AG04449 (cell line): ENCODE measurements at regions of chr22 and their contacts with region 1.

Region 1: GRCh38 chr22:24423519-24424000 is 3.8 kb upstream of the ADORA2A start:
- DNase-seq: no peak
- H3K4me3 ChIP-seq: peak overlapping the region; percentile 57
- CTCF ChIP-seq: peak; percentile 80

Region 2: DNA sequence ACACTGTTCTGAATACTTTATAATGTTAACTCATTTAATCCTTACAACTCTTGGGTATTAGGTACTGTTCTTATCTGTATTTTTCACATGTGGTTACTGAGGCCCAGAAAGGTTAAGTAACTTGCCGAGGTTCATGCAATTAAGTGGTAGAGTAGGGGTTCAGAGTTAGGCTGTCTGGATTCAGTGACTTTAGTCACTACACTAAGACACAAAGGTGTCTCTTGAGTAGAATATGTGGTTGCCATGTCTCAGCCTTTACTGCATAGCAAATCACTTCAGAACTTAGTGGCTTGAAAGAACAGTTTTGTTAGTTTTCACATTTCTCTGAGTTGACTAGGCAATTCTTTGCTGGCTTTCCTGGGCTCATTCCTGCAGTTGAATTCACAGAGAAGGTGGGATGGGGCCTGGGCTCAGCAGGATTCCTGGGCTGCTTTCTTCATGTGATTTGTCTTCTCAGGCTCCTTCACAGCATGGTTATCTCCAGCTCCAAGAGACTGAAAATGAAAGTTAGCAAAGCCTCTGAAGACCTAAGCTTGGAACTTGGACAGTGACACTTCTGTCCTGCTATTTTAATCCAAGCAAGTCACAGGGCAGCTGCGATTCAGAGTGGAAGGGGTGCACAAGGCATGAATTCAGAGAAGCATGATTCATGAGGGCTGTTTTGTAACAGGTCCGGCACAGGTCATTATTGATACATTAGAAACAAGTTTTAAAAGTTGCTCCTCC is 84.7 kb before region 1 on chr22:
- CTCF ChIA-PET with region 1: no interaction called
- POLR2A ChIA-PET with region 1: no interaction called
- DNase-seq: peak; percentile 26
- H3K4me3 ChIP-seq: no peak overlapping the region
- CTCF ChIP-seq: no peak

Region 3: DNA sequence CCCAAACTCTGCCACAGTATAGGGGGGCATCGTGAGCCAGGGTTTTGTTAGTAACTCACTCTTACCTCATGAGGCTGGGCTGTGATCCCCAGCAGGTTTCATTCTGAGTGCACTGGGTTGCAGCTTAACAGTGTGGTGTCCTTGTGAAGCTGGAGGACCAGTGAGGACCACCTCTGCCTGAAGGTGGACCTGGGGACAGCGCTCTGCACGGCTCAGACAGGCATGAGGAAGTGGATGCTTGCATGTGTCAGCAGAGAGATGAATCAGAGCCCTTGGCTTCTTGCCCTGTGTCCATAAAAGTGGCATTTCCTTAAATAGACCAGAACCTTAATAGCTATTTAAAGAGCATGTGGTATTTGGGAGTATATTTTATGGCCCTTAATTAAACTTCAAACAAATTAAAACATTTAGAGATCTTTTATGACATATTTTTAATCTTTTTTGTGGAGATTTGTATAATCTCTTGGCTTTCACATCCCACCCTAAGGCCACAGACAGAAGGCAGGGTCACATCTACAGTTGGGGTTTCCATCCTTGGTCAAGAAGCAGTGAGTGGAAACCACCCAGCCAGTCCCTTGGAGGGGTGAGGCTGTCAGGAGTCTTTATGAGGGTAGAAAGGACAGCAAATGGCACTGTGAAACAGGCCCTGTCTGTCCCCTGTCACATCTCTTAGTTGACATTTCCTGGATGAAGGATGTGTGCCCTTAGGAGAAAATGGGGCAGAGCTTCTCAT is 20.9 kb before region 1 on chr22:
- CTCF ChIA-PET with region 1: interaction called, 15 read pairs
- POLR2A ChIA-PET with region 1: interaction called, 3 read pairs
- DNase-seq: peak; percentile 86
- H3K4me3 ChIP-seq: no peak overlapping the region
- CTCF ChIP-seq: no peak

Region 4: DNA sequence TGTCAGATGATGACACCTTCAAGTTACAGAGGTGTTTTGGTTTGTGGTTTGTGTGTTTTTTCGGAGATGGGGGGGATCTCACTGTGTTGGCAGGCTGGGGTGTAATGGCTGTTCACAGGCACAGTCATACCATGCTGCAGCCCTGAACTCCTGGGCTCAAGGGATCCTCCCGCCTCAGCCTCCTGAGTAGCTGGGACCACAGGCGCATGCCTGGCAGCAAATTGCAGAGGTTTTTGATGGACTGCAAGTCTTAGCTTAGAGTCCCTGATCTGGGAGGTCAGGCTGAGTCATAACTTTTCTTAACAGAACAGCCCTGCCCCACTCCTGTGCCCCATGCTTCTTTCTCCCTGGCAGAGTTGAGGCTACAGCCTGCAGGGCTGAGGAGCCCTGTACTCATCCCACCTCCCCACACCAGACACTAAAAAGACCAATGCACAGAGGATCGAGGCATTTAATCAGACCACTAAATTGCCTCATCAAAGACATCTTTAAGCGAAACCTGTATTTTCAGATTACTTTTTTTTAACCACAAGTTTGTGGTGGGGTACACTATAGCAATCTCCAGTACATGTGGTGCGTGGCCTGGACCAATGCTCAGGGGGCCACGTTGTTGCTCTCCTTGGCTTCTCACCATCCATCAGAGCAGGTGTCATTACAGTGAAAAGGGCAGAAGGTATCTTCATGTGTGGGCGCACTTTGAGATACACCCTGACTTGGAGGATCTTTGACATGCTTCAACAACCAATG is 13.3 kb before region 1 on chr22:
- CTCF ChIA-PET with region 1: interaction called, 32 read pairs
- POLR2A ChIA-PET with region 1: interaction called, 3 read pairs
- DNase-seq: no peak
- H3K4me3 ChIP-seq: no peak overlapping the region
- CTCF ChIP-seq: no peak

Region 5: GRCh38 chr22:24433813-24434470 is 10.4 kb after region 1 on chr22:
- CTCF ChIA-PET with region 1: interaction called, 63 read pairs
- POLR2A ChIA-PET with region 1: no interaction called
- DNase-seq: no peak
- H3K4me3 ChIP-seq: no peak overlapping the region
- CTCF ChIP-seq: no peak

Region 6: DNA sequence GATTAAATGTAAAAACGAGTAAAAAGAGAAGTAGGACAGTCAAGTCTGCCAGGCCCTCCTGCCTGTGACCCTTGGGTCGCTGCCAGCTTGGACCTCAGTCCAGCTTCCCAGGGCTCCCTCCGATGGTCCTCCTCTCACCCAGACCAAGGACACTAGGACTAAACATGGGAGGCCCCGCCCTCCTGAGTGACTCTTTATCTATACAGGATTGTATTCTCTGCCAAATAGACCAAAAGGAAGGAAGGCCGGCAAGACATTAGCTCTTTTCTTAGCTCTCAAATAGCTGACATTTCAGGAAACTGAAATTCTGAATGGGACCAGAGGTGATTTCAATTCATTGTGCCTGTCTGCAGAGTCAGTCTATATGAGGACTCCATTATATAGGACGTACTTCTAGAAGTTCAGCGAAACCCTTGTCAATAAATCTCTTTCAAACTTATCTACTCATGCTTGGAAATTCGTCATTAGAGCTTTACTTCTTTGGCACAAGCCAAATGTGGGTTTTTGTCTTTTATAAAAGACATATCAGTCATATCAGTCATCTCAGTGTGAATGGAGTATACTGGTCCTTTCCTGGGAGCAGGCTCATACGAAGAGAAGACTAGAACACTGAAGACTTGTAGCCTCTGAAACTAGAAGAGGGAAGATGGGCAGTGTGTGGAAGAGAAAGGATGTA is 32.3 kb after region 1 on chr22:
- CTCF ChIA-PET with region 1: interaction called, 12 read pairs
- POLR2A ChIA-PET with region 1: no interaction called
- DNase-seq: no peak
- H3K4me3 ChIP-seq: no peak overlapping the region
- CTCF ChIP-seq: no peak

Region 7: GRCh38 chr22:24503137-24503842 is 79.7 kb after region 1 on chr22:
- CTCF ChIA-PET with region 1: interaction called, 50 read pairs
- POLR2A ChIA-PET with region 1: no interaction called
- DNase-seq: no peak
- H3K4me3 ChIP-seq: no peak overlapping the region
- CTCF ChIP-seq: peak; percentile 75

Region 8: DNA sequence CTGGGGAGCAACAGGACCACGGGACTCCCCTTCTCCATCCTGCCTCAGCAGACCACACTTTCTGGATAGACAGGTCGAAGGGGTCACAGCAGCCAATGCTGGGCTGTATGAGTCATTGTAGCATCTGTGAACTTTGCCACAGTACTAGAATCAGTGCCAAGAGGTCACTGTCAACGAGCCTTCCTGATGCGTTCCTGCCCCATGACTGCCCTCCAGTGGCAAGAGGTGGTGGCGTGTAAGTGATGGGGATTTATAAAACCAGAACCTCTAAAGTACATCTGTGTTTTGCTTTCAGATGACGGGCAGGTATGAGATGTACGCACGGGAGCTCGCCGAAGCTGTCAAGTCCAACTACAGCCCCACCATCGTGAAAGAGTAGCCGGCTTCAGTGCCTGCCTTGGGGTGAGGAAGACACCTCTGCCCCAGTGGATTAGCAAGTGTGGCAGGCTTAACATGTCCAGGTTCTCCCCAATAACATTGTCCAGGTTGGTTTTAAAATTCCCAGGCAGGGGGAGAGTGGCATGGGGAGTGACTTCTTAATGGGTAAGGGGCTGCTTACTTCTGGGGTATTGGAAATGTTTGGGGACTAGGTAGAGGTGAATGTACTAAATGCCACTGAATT is 102.0 kb after region 1 on chr22:
- CTCF ChIA-PET with region 1: interaction called, 39 read pairs
- POLR2A ChIA-PET with region 1: no interaction called
- DNase-seq: no peak
- H3K4me3 ChIP-seq: no peak overlapping the region
- CTCF ChIP-seq: peak; percentile 89